Calu3 (cell line): ENCODE measurements at regions of chr12 and their contacts with region 1.

Region 1: DNA sequence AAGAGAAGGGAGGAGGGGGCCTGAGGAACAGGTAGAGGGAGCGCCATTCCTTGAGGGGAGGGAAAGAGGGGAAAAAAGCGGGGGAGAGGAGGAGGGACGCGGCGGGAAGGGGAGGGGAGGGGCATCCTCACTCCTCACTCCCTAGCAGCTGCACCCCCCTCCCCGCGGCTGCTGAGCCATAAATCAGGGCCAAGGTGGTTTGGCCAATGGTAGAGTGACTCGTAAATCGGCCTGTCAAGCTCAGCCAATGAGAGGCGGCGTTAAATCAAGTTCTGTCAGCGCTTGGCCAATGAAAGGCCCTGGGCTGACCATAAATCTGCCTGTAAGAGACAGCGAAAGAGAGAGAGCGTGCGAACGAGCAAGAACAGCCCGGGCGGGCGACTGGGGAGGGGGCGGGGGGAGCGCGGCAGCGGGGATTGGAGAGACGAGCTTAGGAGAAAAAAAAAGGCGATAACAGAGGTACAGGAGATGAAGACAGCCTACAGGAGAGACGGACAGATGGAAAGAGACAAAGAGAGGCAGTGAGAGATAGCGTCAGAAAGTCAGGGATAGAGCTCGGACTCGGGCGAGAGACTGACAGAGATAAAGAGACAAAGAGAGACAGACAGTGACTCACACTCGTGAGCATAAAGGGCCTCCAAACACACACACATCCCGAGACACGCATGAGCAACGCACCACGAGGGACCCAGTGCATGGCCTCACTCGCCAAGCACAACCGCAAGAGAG is 5.1 kb downstream of the GPR84 start:
- DNase-seq: peak; percentile 96
- H3K4me3 Mint-ChIP-seq: no peak overlapping the region
- H3K27ac Mint-ChIP-seq: no peak overlapping the region
- H3K4me1 Mint-ChIP-seq: peaks cover 8% of the 10 kb centered on the region
- H3K27me3 Mint-ChIP-seq: peaks cover 17% of the 10 kb centered on the region
- CTCF ChIP-seq: no peak

Region 2: GRCh38 chr12:54147186-54147585 is 212.0 kb before region 1 on chr12:
- CTCF ChIA-PET with region 1: no interaction called
- intact Hi-C with region 1: no loop called
- DNase-seq: peak; percentile 62
- H3K4me3 Mint-ChIP-seq: no peak overlapping the region
- H3K27ac Mint-ChIP-seq: no peak overlapping the region
- H3K4me1 Mint-ChIP-seq: no peaks in the 10 kb centered on the region
- H3K27me3 Mint-ChIP-seq: peaks cover 39% of the 10 kb centered on the region
- CTCF ChIP-seq: no peak

Region 3: DNA sequence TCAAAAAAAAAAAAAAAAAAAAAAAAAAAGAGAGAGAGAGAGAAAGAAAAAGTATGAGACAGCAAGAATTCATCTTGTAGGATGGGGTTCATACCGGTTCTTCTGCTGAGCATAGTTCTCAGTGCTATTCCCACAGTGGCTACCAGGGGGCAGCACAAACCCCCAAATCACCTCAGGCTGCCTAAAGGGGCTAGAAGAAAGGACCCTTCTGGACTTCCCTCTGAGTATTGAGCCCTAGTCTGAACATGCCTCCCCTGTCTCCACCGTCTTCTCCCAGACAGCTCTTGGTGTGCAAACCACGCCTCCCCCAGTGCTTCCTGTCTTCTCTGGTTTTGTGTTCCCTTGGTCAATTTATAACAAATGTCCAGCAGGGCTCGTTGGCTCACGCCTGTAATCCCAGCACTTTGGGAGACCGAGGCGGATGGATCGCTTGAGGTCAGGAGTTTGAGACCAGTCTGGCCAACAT is 139.1 kb before region 1 on chr12:
- CTCF ChIA-PET with region 1: interaction called, 7 read pairs
- intact Hi-C with region 1: loop called (anchors 2 kb)
- DNase-seq: peak; percentile 76
- H3K4me3 Mint-ChIP-seq: no peak overlapping the region
- H3K27ac Mint-ChIP-seq: no peak overlapping the region
- H3K4me1 Mint-ChIP-seq: peaks cover 16% of the 10 kb centered on the region
- H3K27me3 Mint-ChIP-seq: peaks cover 36% of the 10 kb centered on the region
- CTCF ChIP-seq: peak; percentile 90

Region 4: GRCh38 chr12:54251667-54252284 is 107.4 kb before region 1 on chr12:
- CTCF ChIA-PET with region 1: interaction called, 13 read pairs
- intact Hi-C with region 1: loop called (anchors 10 kb)
- DNase-seq: peak; percentile 41
- H3K4me3 Mint-ChIP-seq: no peak overlapping the region
- H3K27ac Mint-ChIP-seq: no peak overlapping the region
- H3K4me1 Mint-ChIP-seq: no peaks in the 10 kb centered on the region
- H3K27me3 Mint-ChIP-seq: no peaks in the 10 kb centered on the region
- CTCF ChIP-seq: peak; percentile 42

Region 5: GRCh38 chr12:54294152-54294952 is 64.8 kb before region 1 on chr12:
- CTCF ChIA-PET with region 1: interaction called, 13 read pairs
- intact Hi-C with region 1: loop called (anchors 1 kb)
- DNase-seq: peak; percentile 77
- H3K4me3 Mint-ChIP-seq: no peak overlapping the region
- H3K27ac Mint-ChIP-seq: peak overlapping the region; percentile 40
- H3K4me1 Mint-ChIP-seq: peaks cover 10% of the 10 kb centered on the region
- H3K27me3 Mint-ChIP-seq: peaks cover 7% of the 10 kb centered on the region
- CTCF ChIP-seq: peak; percentile 92

Region 6: DNA sequence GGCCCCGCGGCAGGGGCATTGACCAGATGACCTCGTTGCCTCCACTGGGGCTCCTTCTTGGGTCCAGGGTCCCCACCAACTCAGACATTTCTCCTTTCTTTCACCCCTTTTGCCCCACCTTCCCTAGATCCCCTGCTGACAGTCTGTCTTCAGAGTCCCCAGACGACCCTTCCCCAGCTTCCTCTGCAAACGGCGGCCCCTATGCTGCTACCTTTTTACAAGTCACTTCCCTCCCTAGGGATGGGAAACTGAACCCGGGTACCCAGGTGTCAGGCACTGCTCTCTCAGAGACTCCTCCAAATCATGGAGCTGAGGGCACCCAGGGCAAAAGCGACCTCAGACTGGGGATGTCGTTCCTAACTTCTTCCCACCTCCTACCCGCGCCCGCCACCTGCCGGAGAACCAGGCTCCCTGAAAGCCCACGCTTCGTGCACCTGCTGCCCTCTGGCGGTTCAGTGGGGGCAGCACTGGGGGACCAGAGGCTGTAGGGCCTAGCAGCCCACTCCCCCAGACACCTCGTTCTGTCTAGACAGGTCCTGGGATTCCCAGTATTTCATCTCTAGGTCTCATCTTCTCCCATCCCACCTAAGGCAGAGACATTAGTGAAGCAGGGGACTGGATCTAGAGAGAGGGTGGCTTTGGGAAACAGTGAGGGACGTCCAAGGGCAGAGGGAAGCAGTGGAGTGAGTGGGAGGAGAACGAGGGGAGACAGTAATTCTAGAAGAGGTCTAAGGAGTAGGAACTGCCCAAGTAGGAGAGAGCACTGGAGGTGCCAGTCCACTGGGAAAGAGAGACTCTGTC is 20.4 kb after region 1 on chr12:
- CTCF ChIA-PET with region 1: interaction called, 11 read pairs
- intact Hi-C with region 1: no loop called
- DNase-seq: peak; percentile 98
- H3K4me3 Mint-ChIP-seq: peak overlapping the region; percentile 73
- H3K27ac Mint-ChIP-seq: no peak overlapping the region
- H3K4me1 Mint-ChIP-seq: peaks cover 25% of the 10 kb centered on the region
- H3K27me3 Mint-ChIP-seq: no peaks in the 10 kb centered on the region
- CTCF ChIP-seq: peak; percentile 100

Region 7: GRCh38 chr12:54442099-54442498 is 82.9 kb after region 1 on chr12:
- CTCF ChIA-PET with region 1: no interaction called
- intact Hi-C with region 1: no loop called
- DNase-seq: no peak
- H3K4me3 Mint-ChIP-seq: no peak overlapping the region
- H3K27ac Mint-ChIP-seq: no peak overlapping the region
- H3K4me1 Mint-ChIP-seq: no peaks in the 10 kb centered on the region
- H3K27me3 Mint-ChIP-seq: peaks cover 47% of the 10 kb centered on the region
- CTCF ChIP-seq: no peak

Region 8: GRCh38 chr12:54452628-54453027 is 93.4 kb after region 1 on chr12:
- CTCF ChIA-PET with region 1: no interaction called
- intact Hi-C with region 1: no loop called
- DNase-seq: no peak
- H3K4me3 Mint-ChIP-seq: no peak overlapping the region
- H3K27ac Mint-ChIP-seq: no peak overlapping the region
- H3K4me1 Mint-ChIP-seq: no peaks in the 10 kb centered on the region
- H3K27me3 Mint-ChIP-seq: no peaks in the 10 kb centered on the region
- CTCF ChIP-seq: no peak